Naive thymus-derived CD4-positive, alpha-beta T cell (primary cell): ENCODE measurements at regions of chr21 and their contacts with region 1.

Region 1: DNA sequence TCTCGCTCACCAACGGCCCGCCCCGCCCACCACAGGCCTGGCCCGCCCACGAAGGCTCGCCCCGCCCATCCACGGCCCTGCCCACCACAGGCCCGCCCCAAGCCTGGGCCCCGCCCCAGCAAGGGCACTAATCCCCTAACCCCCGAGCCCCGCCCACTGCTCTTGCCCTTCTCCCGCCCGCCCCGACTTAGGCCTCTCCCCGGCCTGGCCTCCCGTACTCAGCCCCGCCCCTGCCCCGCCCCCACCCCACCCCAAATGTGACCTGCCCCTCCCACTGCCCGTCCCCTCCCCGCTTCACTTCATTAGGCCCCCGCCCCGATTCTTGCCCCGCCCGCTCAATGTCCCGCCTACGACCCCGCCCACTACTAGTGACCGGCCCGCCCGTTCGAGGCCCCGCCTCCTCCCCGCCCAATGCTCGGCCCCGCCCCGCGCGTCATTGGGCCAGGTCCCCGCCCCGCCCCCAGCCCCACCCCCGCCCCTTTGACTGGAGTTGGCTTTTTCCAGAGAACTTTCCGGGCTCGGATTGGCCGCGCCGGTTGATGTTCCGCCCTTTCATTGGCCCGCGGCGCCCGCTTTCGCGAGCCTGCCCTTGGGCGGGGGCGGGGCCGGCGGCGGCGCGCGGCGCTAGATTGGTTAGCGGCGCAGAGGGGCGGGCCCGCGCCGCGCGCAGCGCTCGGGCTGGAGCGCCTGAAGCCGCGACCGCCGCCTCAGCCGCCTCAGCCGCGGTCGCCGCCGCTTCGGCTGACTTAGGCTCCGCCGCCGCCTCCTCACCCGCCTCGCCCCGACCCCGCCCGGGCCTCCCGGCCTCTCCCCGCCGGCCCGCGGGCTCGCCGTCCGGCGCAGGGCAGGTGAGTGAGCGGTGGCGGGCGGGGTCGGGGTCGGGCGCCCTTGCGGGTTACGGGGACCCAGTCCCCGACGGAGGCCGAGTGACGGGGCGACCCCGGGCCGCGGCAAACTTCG is at the start of gene PCBP3:
- DNase-seq: peak; percentile 93 to 99 (median 96)
- ATAC-seq: peak; percentile 87
- H3K4me3 ChIP-seq: no peak within 1 kb of the TSS
- H3K4me3 Mint-ChIP-seq: peak within 1 kb of the TSS; percentile 74 to 86 (median 81)
- H3K27ac ChIP-seq: peak within 1 kb of the TSS; percentile 57
- H3K27ac Mint-ChIP-seq: peak within 1 kb of the TSS in 7 of 9 donors; percentile 28 to 84 (median 74)
- H3K4me1 ChIP-seq: peaks cover 6 to 38% of the 10 kb centered on the region in 2 donors
- H3K4me1 Mint-ChIP-seq: peaks cover 15 to 51% (median 41%) of the 10 kb centered on the region in 7 donors
- H3K27me3 ChIP-seq: peaks cover 0 to 16% of the 10 kb centered on the region in 2 donors
- H3K27me3 Mint-ChIP-seq: peaks cover 0 to 19% (median 6%) of the 10 kb centered on the region in 5 donors
- total RNA-seq, gene PCBP3: 1.2 to 5.2 (median 4.0) TPM

Region 2: DNA sequence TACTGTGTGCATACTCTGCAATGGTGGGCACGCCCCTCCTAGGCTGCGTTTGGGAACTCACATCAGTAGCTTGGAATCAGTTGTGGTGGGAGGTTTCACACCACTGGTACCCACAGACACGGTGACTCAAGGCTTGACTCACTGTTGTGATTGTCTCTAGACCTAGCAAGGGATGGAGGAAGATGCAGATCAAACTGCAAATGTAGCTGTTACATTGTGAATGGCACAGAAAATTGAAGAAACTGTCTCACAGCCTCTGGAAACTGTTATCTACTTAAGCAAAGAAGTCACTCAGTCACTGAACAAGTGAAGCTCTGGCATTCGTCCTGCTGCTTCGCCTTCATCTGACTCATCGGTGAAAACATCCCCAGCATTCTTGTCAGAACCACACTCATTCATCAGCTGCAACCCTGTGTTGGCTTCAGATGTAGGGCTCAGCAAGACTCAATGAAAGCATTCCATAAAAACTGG is 415.1 kb before region 1 on chr21:
- CTCF ChIA-PET with region 1: no interaction called
- POLR2A ChIA-PET with region 1: no interaction called
- intact Hi-C with region 1: loop called in 1 of 2 experiments (anchors 5 kb)
- DNase-seq: peak in 1 of 9 donors; percentile 65
- ATAC-seq: peak; percentile 70
- H3K4me3 ChIP-seq: no peak overlapping the region
- H3K4me3 Mint-ChIP-seq: peak overlapping the region in 1 of 10 donors; percentile 53
- H3K27ac ChIP-seq: no peak overlapping the region
- H3K27ac Mint-ChIP-seq: peak overlapping the region in 4 of 9 donors; percentile 11 to 70 (median 42)
- H3K4me1 ChIP-seq: peaks cover 0 to 44% of the 10 kb centered on the region in 2 donors
- H3K4me1 Mint-ChIP-seq: peaks cover 7 to 49% (median 26%) of the 10 kb centered on the region in 7 donors
- H3K27me3 ChIP-seq: no peaks in the 10 kb centered on the region
- H3K27me3 Mint-ChIP-seq: peaks cover 0 to 12% (median 0%) of the 10 kb centered on the region in 5 donors

Region 3: GRCh38 chr21:45281411-45282282 is 361.7 kb before region 1 on chr21:
- CTCF ChIA-PET with region 1: no interaction called
- POLR2A ChIA-PET with region 1: no interaction called
- intact Hi-C with region 1: no loop called
- DNase-seq: no peak
- ATAC-seq: no peak
- H3K4me3 ChIP-seq: no peak overlapping the region
- H3K4me3 Mint-ChIP-seq: no peak overlapping the region
- H3K27ac ChIP-seq: no peak overlapping the region
- H3K27ac Mint-ChIP-seq: no peak overlapping the region
- H3K4me1 ChIP-seq: peaks cover 0 to 4% of the 10 kb centered on the region in 2 donors
- H3K4me1 Mint-ChIP-seq: peaks cover 6 to 21% (median 17%) of the 10 kb centered on the region in 7 donors
- H3K27me3 ChIP-seq: no peaks in the 10 kb centered on the region
- H3K27me3 Mint-ChIP-seq: no peaks in the 10 kb centered on the region

Region 4: DNA sequence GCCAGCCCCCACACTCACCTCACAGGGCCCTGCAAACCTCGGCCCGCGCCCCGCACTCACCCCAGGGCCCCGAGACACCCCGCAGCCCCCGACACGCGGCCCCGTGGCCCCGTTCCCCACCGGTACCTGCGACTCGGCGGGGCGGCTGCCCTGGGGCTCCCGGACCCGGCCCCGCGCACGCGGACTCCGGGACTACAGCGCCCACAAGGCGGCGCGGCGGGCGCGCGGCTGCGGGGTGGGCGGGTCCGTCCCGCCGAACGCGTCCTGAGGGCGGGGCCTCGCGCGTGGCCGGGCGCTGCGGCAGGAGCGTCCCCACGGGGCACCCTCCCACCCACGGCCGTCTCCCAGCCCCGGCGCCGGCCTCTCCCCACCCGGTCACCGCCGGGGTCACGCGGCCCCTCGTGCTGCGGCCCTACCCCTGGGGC is 101.0 kb before region 1 on chr21 and contains the start of gene SLC19A1:
- CTCF ChIA-PET with region 1: no interaction called
- POLR2A ChIA-PET with region 1: interaction called, 3 read pairs
- intact Hi-C with region 1: loop called in 1 of 2 experiments (anchors 2 kb)
- DNase-seq: peak; percentile 55 to 89 (median 75)
- ATAC-seq: peak; percentile 93
- H3K4me3 ChIP-seq: peak within 1 kb of the TSS; percentile 61
- H3K4me3 Mint-ChIP-seq: peak within 1 kb of the TSS; percentile 66 to 89 (median 78)
- H3K27ac ChIP-seq: peak within 1 kb of the TSS; percentile 80
- H3K27ac Mint-ChIP-seq: peak within 1 kb of the TSS in 7 of 9 donors; percentile 14 to 87 (median 74)
- H3K4me1 ChIP-seq: peaks cover 7 to 15% of the 10 kb centered on the region in 2 donors
- H3K4me1 Mint-ChIP-seq: peaks cover 7 to 18% (median 15%) of the 10 kb centered on the region in 7 donors
- H3K27me3 ChIP-seq: no peaks in the 10 kb centered on the region
- H3K27me3 Mint-ChIP-seq: no peaks in the 10 kb centered on the region
- total RNA-seq, gene SLC19A1: 10.5 to 49.1 (median 21.6) TPM

Region 5: GRCh38 chr21:45615145-45615711 is 28.1 kb before region 1 on chr21:
- CTCF ChIA-PET with region 1: no interaction called
- POLR2A ChIA-PET with region 1: interaction called, 4 read pairs
- intact Hi-C with region 1: loop called (anchors 1 to 2 kb)
- DNase-seq: peak; percentile 73 to 95 (median 93)
- ATAC-seq: peak; percentile 94
- H3K4me3 ChIP-seq: peak overlapping the region; percentile 45
- H3K4me3 Mint-ChIP-seq: peak overlapping the region; percentile 79 to 95 (median 87)
- H3K27ac ChIP-seq: peak overlapping the region; percentile 95
- H3K27ac Mint-ChIP-seq: peak overlapping the region; percentile 73 to 100 (median 98)
- H3K4me1 ChIP-seq: peaks cover 16 to 41% of the 10 kb centered on the region in 2 donors
- H3K4me1 Mint-ChIP-seq: peaks cover 17 to 58% (median 48%) of the 10 kb centered on the region in 7 donors
- H3K27me3 ChIP-seq: no peaks in the 10 kb centered on the region
- H3K27me3 Mint-ChIP-seq: peaks cover 0 to 34% (median 0%) of the 10 kb centered on the region in 5 donors

Region 6: DNA sequence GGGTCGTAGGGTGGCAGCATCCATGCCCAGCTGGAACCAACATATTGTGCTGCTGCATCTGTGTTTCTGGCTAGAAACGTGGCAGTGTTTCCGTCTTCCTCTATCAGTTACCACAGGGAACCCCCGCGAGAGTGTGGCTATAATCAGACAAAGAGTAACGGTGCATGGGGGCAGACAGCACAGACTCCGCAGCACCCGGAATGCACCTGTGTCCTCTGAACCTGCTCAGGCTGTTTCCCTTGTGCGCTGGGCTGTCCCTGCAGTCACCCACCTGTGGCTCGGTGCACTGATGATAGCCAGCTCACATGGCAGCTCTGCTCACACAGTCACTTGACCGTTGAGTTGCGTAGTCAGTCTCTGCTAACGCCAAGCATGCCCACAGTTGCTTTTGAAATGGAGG is 11.1 kb before region 1 on chr21:
- CTCF ChIA-PET with region 1: no interaction called
- POLR2A ChIA-PET with region 1: no interaction called
- intact Hi-C with region 1: no loop called
- DNase-seq: peak in 2 of 9 donors; percentile 26 to 43
- ATAC-seq: peak; percentile 62
- H3K4me3 ChIP-seq: no peak overlapping the region
- H3K4me3 Mint-ChIP-seq: peak overlapping the region in 3 of 10 donors; percentile 15 to 26 (median 19)
- H3K27ac ChIP-seq: no peak overlapping the region
- H3K27ac Mint-ChIP-seq: peak overlapping the region in 3 of 9 donors; percentile 37 to 81 (median 77)
- H3K4me1 ChIP-seq: peaks cover 0 to 16% of the 10 kb centered on the region in 2 donors
- H3K4me1 Mint-ChIP-seq: peaks cover 0 to 26% (median 20%) of the 10 kb centered on the region in 7 donors
- H3K27me3 ChIP-seq: no peaks in the 10 kb centered on the region
- H3K27me3 Mint-ChIP-seq: peaks cover 0 to 6% (median 0%) of the 10 kb centered on the region in 5 donors

Region 7: DNA sequence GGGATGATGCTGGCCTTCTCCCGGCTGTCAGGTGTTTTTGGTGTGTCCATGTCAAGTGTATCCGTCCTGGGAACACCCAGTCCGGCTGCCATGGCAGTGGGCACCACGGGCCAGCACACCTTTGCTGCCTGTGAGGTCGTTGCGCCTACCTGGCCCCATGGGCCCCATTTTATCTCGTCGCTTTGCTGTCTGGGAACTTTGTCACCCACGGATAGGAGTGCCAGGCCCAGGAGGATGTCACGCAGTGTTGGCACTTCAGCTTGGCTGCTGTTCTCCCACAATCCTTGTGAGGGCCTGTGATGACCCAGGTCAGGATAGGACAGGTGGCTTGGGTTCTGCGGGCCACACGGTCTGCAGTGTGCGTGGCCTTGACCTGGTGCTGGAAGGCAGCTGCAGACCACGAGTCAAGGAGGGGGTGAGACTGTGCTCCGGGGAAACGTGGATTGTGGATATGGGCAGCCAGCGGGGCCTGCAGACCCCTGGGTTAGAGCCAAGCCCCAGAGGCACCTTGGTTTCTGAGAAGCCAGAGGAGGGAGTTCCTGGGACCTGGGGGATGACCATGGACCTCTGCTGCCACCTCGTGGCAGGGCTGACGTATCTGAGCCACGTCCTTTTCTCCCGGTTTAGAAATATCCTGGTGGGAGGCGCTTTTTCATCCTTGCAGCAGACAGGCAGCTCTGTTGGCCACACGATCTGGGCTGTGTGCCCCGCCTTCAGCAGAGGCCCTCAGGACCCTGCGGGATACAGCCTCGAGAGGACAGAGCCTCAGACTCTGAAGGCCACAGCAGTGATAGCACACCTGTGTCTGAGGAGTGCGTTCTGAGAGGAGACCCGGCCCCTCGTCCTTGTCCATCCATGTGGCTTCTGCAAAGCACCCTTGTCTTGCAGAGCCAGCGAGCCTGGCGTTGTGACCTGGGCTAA is 177.1 kb after region 1 on chr21:
- CTCF ChIA-PET with region 1: interaction called, 6 read pairs
- POLR2A ChIA-PET with region 1: no interaction called
- intact Hi-C with region 1: loop called in 1 of 2 experiments (anchors 2 kb)
- DNase-seq: peak; percentile 59 to 81 (median 76)
- ATAC-seq: peak; percentile 80
- H3K4me3 ChIP-seq: no peak overlapping the region
- H3K4me3 Mint-ChIP-seq: peak overlapping the region in 1 of 10 donors; percentile 1
- H3K27ac ChIP-seq: no peak overlapping the region
- H3K27ac Mint-ChIP-seq: peak overlapping the region in 7 of 9 donors; percentile 26 to 89 (median 58)
- H3K4me1 ChIP-seq: peaks cover 0 to 9% of the 10 kb centered on the region in 2 donors
- H3K4me1 Mint-ChIP-seq: peaks cover 0 to 36% (median 17%) of the 10 kb centered on the region in 7 donors
- H3K27me3 ChIP-seq: no peaks in the 10 kb centered on the region
- H3K27me3 Mint-ChIP-seq: no peaks in the 10 kb centered on the region

Region 8: DNA sequence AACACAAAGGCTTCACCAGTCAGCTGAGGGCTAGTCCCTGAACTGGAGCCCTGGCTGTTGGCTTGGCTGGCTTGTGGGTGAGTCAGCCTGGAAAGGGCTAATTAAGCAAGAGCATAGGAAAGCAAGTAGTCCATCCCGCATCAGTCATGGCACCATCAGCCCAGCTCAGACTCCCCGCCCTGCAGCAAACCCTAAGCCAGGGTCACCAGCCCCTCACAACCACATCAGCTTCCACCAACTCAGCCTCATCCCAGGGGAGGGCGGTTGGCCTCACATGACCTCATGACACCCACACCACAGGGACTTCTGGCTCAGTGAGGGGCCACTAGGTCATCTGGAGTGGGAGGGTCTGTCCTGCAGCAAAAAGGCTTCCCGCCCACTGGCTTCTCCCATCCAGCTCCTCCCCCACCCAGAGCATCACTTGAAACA is 548.0 kb after region 1 on chr21:
- CTCF ChIA-PET with region 1: no interaction called
- POLR2A ChIA-PET with region 1: no interaction called
- intact Hi-C with region 1: no loop called
- DNase-seq: no peak
- ATAC-seq: no peak
- H3K4me3 ChIP-seq: no peak overlapping the region
- H3K4me3 Mint-ChIP-seq: no peak overlapping the region
- H3K27ac ChIP-seq: no peak overlapping the region
- H3K27ac Mint-ChIP-seq: peak overlapping the region in 1 of 9 donors; percentile 49
- H3K4me1 ChIP-seq: no peaks in the 10 kb centered on the region
- H3K4me1 Mint-ChIP-seq: no peaks in the 10 kb centered on the region
- H3K27me3 ChIP-seq: no peaks in the 10 kb centered on the region
- H3K27me3 Mint-ChIP-seq: no peaks in the 10 kb centered on the region

Region 9: DNA sequence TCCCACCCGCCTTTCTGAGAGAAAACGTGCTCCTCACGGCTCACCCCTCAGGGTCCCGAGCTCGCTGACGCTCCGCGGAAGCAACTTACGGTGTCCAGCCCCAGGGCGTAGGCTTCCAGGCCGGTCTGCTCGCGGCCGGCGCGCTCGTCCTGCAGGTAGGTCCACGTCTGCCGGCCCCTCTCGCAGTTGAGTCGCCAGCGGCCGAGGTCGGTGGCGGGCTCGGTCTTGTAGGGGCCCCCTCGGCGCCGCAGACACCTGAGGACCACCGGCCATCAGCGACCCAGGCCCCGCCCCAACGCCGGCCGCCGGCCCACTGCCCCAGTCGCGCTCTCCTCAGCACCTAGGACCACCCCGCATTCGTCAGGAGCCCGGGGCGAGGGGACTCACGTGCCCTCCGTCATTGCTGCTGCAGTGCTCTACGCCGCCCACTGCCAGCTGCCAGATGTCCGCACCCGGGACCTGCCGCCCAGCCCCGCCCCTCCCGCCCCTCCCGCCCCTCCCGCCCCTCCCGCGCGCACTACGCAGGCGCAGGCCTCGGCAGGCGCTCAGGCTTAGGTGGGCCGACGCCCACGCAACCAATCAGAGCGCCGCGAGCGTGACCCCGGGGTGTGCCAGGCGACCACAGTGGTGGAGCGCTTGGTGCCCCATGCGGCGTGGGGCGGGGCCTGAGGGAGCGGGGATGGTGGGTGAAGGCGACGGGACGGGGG is 585.2 kb after region 1 on chr21 and contains the start of gene LSS:
- CTCF ChIA-PET with region 1: no interaction called
- POLR2A ChIA-PET with region 1: no interaction called
- intact Hi-C with region 1: loop called (anchors 5 to 10 kb)
- DNase-seq: peak; percentile 91 to 97 (median 96)
- ATAC-seq: peak; percentile 98
- H3K4me3 ChIP-seq: peak within 1 kb of the TSS; percentile 65
- H3K4me3 Mint-ChIP-seq: peak within 1 kb of the TSS; percentile 81 to 99 (median 94)
- H3K27ac ChIP-seq: peak within 1 kb of the TSS; percentile 83
- H3K27ac Mint-ChIP-seq: peak within 1 kb of the TSS; percentile 83 to 98 (median 94)
- H3K4me1 ChIP-seq: peaks cover 15 to 18% of the 10 kb centered on the region in 2 donors
- H3K4me1 Mint-ChIP-seq: peaks cover 17 to 56% (median 43%) of the 10 kb centered on the region in 7 donors
- H3K27me3 ChIP-seq: no peaks in the 10 kb centered on the region
- H3K27me3 Mint-ChIP-seq: no peaks in the 10 kb centered on the region
- total RNA-seq, gene LSS: 41.3 to 64.4 (median 44.9) TPM